ENCODE measurements at regions of chr2 and their contacts with region 1.

Region 1: GRCh38 chr2:120680136-120680761 is 55.4 kb upstream of the GLI2 start:
- DNase-seq: peak; percentile 80
- ATAC-seq: peak; percentile 82
- H3K4me3 ChIP-seq: no peak overlapping the region
- H3K27ac ChIP-seq: no peak overlapping the region
- H3K4me1 ChIP-seq: peaks cover 0 to 10% of the 10 kb centered on the region in 2 experiments; a peak in 2 of 4 replicates
- H3K27me3 ChIP-seq: no peaks in the 10 kb centered on the region
- CTCF ChIP-seq: peak; percentile 65 to 83 (median 65)
- POLR2A ChIP-seq: no peak
- RAD21 ChIP-seq: peak; percentile 92

Region 2: DNA sequence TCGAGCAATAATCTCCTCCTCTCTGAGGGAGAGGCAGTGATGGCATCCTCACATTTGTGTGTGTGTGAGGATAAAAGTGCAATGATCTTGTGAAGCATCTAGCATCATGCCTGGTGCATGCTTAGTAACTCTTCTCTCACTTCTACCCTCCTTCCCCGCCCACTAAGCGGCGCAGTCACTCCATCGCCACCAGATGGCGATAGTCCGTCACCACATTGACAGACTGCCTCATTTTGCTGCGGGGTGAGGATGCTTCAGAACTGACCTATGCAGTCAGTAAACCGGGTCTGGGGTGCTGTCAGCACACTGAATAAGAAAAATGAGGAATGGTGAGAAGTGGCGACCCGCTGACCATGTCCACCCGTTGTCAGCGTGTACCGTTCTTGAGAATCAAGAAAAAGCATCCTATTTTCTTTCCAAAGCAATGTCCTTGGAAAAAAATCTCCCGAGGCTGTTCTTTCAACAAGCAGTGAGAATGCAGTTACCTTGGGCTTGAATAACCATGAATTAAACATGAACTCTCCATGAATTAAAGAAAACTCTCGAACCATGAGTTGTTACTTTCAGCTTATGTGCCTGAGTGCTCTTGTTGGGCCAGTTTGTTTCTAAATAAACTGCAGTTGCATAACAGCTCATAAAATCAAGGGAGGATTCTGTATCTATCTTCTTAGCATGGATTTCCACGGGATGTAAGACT is 1038.5 kb before region 1 on chr2:
- CTCF ChIA-PET with region 1: no interaction called
- POLR2A ChIA-PET with region 1: no interaction called
- RAD21 ChIA-PET with region 1: no interaction called
- intact Hi-C with region 1: loop called (anchors 5 kb)
- DNase-seq: peak; percentile 63
- ATAC-seq: peak; percentile 99
- H3K4me3 ChIP-seq: no peak overlapping the region
- H3K27ac ChIP-seq: no peak overlapping the region
- H3K4me1 ChIP-seq: no peaks in the 10 kb centered on the region
- H3K27me3 ChIP-seq: no peaks in the 10 kb centered on the region
- CTCF ChIP-seq: peak; percentile 91 to 99 (median 97)
- POLR2A ChIP-seq: no peak
- RAD21 ChIP-seq: peak; percentile 84

Region 3: DNA sequence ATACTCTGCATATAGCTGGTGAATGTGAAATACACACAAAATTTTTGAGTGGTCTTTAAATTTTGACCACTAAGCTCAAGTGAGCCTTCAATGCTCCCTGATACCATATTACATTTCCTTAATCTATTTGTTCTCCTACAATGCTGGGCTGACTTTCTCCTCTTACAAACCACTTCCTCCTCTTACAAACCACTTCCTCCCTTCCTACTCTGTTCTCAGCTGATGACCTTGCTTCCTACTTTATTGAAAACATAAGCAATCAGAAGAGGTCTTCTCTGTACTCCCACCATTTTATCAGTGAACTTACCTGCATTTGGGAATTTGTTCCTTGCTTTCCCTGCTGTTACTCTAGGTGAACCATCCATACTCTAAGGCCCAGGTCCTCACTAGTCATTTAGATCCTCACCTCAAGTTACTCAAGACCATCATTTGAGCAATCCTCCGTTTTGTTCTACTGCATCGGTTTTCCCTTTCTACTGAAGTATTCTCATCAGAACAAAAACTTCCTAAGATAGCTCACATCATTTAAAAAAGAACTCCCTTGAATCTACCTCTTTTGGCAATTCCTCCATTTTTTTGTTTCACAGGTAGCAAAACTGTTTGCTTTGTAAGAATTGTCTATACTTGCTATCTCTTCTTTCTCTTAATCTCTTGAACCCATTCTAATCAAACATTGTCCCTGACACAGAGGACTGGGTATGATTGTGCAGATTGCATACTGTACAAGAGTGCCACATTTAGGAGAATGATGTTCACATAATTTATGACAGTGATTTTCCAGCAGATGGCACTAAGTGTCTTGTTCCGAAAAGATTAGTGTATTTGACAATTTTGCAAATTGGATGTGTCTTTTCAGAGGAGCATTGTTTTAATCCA is 570.8 kb before region 1 on chr2:
- CTCF ChIA-PET with region 1: no interaction called
- POLR2A ChIA-PET with region 1: no interaction called
- RAD21 ChIA-PET with region 1: no interaction called
- intact Hi-C with region 1: loop called (anchors 5 kb)
- DNase-seq: peak; percentile 12
- ATAC-seq: peak; percentile 80
- H3K4me3 ChIP-seq: no peak overlapping the region
- H3K27ac ChIP-seq: no peak overlapping the region
- H3K4me1 ChIP-seq: peaks cover 0 to 6% of the 10 kb centered on the region in 2 experiments; a peak in 1 of 4 replicates
- H3K27me3 ChIP-seq: no peaks in the 10 kb centered on the region
- CTCF ChIP-seq: peak; percentile 31 to 75 (median 62)
- POLR2A ChIP-seq: no peak
- RAD21 ChIP-seq: peak; percentile 68

Region 4: DNA sequence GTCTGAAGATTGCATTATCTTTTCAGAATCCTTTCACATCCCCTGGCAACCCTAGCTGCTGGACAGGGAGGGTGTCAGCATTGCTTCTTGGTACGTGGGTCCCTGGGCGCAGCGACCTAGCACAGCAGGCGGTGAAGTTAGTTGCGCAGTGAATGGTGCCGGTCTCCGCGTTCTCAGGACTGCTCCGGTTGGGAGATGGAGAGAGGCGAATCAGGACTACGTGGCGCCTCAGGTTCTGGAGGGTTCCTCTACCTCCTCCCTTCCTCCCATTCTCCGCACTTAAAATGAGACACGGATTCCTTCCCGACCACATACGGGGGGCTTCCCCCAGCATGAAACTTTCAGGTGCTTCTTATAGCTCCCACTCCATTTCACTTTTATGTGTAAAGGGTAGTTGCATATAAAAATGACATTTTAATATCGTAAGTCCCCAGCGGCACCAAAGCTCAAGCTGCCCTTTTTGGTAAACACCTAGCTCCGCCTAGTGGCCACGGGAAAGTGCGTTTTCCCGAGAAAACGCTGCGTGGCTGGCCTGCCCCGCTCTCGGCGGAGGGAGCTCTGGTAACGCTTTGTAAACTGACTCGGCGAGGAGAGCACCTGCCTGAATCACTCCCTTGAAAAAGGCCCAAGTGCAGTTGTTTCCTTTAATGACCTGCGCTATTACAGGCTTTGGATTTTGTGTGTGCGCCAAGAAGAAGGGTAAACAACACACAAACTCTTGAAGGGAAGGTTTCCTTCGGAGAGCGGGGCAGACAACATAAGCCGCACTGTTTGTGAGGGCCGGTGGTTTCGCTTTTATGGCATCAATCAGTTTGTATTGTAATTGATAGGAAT is 367.2 kb before region 1 on chr2:
- CTCF ChIA-PET with region 1: interaction called, 16 read pairs
- POLR2A ChIA-PET with region 1: no interaction called
- RAD21 ChIA-PET with region 1: interaction called in 1 of 2 experiments, 4 read pairs
- intact Hi-C with region 1: loop called (anchors 1 kb)
- DNase-seq: peak; percentile 60
- ATAC-seq: peak; percentile 86
- H3K4me3 ChIP-seq: peak overlapping the region; percentile 31 to 44
- H3K27ac ChIP-seq: no peak overlapping the region
- H3K4me1 ChIP-seq: peaks cover 0 to 11% of the 10 kb centered on the region in 2 experiments; a peak in 1 of 4 replicates
- H3K27me3 ChIP-seq: no peaks in the 10 kb centered on the region
- CTCF ChIP-seq: peak; percentile 84 to 99 (median 95)
- POLR2A ChIP-seq: no peak
- RAD21 ChIP-seq: peak; percentile 100

Region 5: DNA sequence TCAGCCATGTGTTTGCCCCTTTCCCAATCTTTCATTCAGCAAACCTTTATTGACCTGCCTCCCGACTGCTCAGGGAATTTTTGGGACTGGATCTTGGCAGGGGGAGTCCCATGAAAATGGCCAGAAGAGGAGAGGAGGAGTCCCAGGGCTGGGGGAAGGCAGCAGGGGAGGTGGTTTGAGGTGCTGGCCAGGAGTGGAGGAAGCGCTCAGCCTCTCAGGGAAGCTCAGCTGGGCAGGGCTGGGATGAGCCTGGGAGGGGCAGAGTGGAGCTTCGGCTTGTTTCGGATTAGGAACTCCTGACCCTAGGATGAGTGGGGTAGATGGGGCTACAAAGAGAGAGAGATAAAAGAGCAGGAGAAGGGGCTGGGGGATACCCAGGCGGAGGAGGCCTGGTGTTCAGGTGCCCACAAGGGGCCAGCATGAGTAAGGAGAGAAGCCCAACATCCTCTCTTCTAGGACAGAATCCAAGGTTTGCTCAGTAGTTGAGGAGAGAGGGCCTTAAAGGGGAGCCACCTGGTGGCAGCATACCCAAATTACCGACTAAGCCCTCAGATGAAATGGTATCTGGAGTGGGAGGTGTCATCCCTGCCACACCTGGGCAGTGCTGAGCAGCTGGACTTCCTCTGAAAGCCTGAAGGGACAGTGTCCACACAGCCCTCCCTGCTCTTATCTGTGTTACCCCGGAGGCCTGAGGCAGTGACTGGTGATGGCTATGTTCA is 243.2 kb before region 1 on chr2:
- CTCF ChIA-PET with region 1: no interaction called
- POLR2A ChIA-PET with region 1: no interaction called
- RAD21 ChIA-PET with region 1: no interaction called
- intact Hi-C with region 1: loop called (anchors 2 kb)
- DNase-seq: peak; percentile 50
- ATAC-seq: peak; percentile 86
- H3K4me3 ChIP-seq: no peak overlapping the region
- H3K27ac ChIP-seq: no peak overlapping the region
- H3K4me1 ChIP-seq: peaks cover 0 to 15% of the 10 kb centered on the region in 2 experiments; a peak in 2 of 4 replicates
- H3K27me3 ChIP-seq: no peaks in the 10 kb centered on the region
- CTCF ChIP-seq: peak; percentile 71 to 88 (median 72)
- POLR2A ChIP-seq: no peak
- RAD21 ChIP-seq: peak; percentile 68